Transverse colon (tissue), 4 donors: ENCODE measurements at regions of chr6 and their contacts with region 1.

Region 1: GRCh38 chr6:148578245-148578732 is 168.5 kb upstream of the UST start:
- DNase-seq: peak; percentile 64
- H3K4me3 ChIP-seq: no peak overlapping the region
- H3K27ac ChIP-seq: no peak overlapping the region
- H3K4me1 ChIP-seq: no peaks in the 10 kb centered on the region
- H3K27me3 ChIP-seq: no peaks in the 10 kb centered on the region
- CTCF ChIP-seq: peak; percentile 62 to 68 (median 65)
- EP300 ChIP-seq: no peak
- POLR2A ChIP-seq: no peak

Region 2: DNA sequence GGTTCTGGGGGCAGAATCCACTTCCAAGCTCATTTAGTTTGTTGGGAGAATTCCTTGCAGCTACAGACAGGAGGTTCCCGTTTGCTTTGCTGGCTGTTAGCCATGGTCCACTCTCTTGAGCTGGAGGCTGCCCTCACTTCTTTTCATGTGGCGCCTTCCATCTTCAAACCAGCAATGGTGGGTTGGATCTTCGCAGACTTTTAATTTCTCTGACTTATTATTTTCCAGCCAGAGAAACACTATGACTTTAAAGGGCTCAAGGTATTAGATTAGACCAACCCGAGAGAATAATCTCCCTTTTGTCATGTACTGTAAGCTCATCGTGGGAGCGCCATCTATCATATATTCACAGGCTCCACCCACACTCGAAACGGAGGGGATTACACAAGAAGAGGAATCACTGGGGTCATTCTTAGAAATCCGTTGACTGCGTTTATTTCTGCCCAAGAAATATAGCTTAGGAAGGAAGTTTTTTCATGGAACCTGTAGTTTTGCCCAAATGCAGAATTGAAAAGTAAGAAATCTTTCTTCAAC is 1030.9 kb before region 1 on chr6:
- in situ Hi-C with region 1: no loop called
- intact Hi-C with region 1: no loop called
- DNase-seq: no peak
- H3K4me3 ChIP-seq: no peak overlapping the region
- H3K27ac ChIP-seq: no peak overlapping the region
- H3K4me1 ChIP-seq: no peaks in the 10 kb centered on the region
- H3K27me3 ChIP-seq: no peaks in the 10 kb centered on the region
- CTCF ChIP-seq: no peak
- EP300 ChIP-seq: no peak
- POLR2A ChIP-seq: no peak

Region 3: GRCh38 chr6:147689398-147689797 is 888.9 kb before region 1 on chr6:
- in situ Hi-C with region 1: no loop called
- intact Hi-C with region 1: no loop called
- DNase-seq: no peak
- H3K4me3 ChIP-seq: no peak overlapping the region
- H3K27ac ChIP-seq: no peak overlapping the region
- H3K4me1 ChIP-seq: no peaks in the 10 kb centered on the region
- H3K27me3 ChIP-seq: no peaks in the 10 kb centered on the region
- CTCF ChIP-seq: no peak
- EP300 ChIP-seq: no peak
- POLR2A ChIP-seq: no peak

Region 4: DNA sequence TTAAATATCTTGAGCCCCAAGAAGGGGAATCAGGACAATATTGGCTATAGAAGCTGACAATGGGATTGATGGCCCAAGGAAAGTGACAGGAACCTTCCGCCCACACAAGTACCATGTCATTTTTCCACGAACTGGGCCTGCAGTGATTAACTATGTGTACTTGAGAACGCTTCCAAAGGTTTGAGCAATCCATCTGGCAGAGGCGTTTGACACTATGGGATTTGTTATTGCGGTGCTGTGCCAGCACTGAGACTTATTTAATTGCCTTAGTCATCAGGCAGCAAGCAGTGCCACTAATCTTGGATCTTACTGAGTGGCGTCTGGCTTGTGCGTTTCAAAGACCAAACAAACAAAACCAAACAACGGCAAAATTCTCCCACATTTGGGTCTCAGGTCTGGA is 32.9 kb after region 1 on chr6:
- in situ Hi-C with region 1: no loop called
- intact Hi-C with region 1: no loop called
- DNase-seq: peak; percentile 42
- H3K4me3 ChIP-seq: no peak overlapping the region
- H3K27ac ChIP-seq: peak overlapping the region in 3 of 4 donors; percentile 36 to 64 (median 48)
- H3K4me1 ChIP-seq: peaks cover 0 to 16% (median 5%) of the 10 kb centered on the region in 4 donors
- H3K27me3 ChIP-seq: no peaks in the 10 kb centered on the region
- CTCF ChIP-seq: no peak
- EP300 ChIP-seq: no peak
- POLR2A ChIP-seq: no peak

Region 5: DNA sequence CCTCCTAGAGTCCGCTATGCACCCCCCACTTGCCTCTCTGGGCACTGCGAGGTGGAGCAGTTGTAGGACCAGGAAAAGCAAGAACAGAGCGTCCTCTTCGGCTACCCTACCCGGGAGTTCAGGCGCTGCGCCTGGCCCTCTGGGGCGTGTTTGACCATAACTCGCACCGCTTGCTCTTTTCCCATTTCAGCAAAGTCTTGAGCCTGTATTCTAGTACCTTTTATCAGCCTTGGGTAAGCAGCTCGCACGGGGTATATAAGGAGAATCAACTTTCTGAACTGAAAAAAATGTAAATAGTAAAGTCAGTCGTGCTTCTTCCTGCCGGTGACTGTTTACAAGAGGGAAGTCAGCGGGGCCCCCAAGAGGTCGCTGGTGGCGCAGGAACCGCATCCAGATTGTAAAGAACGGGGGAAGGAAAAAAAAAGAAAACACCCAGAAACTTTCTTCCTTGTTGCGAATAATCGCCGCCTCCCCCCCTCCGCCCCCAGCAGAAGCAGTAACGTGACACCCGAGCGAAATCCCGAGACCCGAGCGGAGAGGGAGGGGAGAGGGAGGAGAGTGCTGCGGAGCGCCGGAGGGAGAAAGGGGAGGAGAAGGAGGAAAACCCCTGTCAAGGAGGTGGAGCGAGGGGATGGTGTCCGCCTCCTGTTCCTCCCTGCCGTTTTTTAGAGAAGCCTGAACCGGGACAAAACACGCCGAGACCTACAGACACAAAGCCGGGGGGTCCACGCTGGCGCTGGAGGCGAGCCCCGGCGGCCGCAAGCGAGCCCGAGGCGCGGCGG is 168.3 kb after region 1 on chr6 and contains the start of gene UST:
- in situ Hi-C with region 1: no loop called
- intact Hi-C with region 1: loop called (anchors 10 kb)
- DNase-seq: peak; percentile 67
- H3K4me3 ChIP-seq: peak within 1 kb of the TSS; percentile 46 to 95 (median 62)
- H3K27ac ChIP-seq: peak within 1 kb of the TSS; percentile 81 to 88 (median 86)
- H3K4me1 ChIP-seq: peaks cover 3 to 22% (median 19%) of the 10 kb centered on the region in 4 donors
- H3K27me3 ChIP-seq: peaks cover 40% of the 10 kb centered on the region
- CTCF ChIP-seq: peak in 4 of 5 experiments; percentile 20 to 26 (median 22)
- EP300 ChIP-seq: no peak
- POLR2A ChIP-seq: peak; percentile 25
- total RNA-seq, gene UST: 4.8 to 9.0 (median 7.8) TPM

Region 6: GRCh38 chr6:148947621-148948444 is 369.5 kb after region 1 on chr6:
- in situ Hi-C with region 1: loop called (anchors 10 to 25 kb)
- intact Hi-C with region 1: loop called (anchors 10 kb)
- DNase-seq: peak; percentile 87
- H3K4me3 ChIP-seq: no peak overlapping the region
- H3K27ac ChIP-seq: no peak overlapping the region
- H3K4me1 ChIP-seq: peaks cover 0 to 21% (median 8%) of the 10 kb centered on the region in 4 donors
- H3K27me3 ChIP-seq: no peaks in the 10 kb centered on the region
- CTCF ChIP-seq: peak; percentile 74 to 89 (median 87)
- EP300 ChIP-seq: no peak
- POLR2A ChIP-seq: no peak

Region 7: DNA sequence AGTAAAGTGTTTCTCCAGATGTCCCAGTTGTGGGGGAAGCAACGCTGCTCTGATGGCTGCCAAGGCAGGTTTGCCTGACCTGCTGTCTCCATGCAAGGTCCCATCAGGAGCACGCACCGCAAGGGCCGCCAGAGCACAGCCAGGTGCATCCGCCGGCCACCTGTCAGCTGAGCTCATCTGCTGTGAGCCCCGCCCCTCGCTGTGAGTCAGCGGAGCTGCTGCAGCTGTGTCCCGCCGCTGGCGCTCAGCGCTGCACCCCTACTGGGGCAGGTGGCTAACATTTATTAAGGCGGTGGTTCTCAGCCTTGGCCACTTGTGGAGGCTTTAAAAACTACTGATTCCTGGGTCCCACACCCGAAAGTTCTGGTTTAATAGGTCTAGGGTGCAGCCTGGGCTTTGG is 394.2 kb after region 1 on chr6:
- in situ Hi-C with region 1: loop called in 1 of 4 experiments (anchors 25 kb)
- intact Hi-C with region 1: no loop called
- DNase-seq: peak; percentile 80
- H3K4me3 ChIP-seq: no peak overlapping the region
- H3K27ac ChIP-seq: no peak overlapping the region
- H3K4me1 ChIP-seq: peaks cover 0 to 9% (median 6%) of the 10 kb centered on the region in 4 donors
- H3K27me3 ChIP-seq: no peaks in the 10 kb centered on the region
- CTCF ChIP-seq: no peak
- EP300 ChIP-seq: no peak
- POLR2A ChIP-seq: no peak